ENCODE measurements at regions of chr16 and their contacts with region 1.

Region 1: GRCh38 chr16:51831595-51832367 is 680.7 kb upstream of the SALL1 start:
- DNase-seq: no peak
- H3K4me3 Mint-ChIP-seq: peak overlapping the region; percentile 19
- H3K27ac Mint-ChIP-seq: peak overlapping the region; percentile 24
- H3K4me1 Mint-ChIP-seq: peaks cover 21% of the 10 kb centered on the region
- H3K27me3 Mint-ChIP-seq: no peaks in the 10 kb centered on the region
- CTCF ChIP-seq: no peak

Region 2: GRCh38 chr16:51880776-51881175 is 49.0 kb after region 1 on chr16:
- CTCF ChIA-PET with region 1: no interaction called
- intact Hi-C with region 1: loop called (anchors 2 kb)
- DNase-seq: peak; percentile 3
- H3K4me3 Mint-ChIP-seq: peak overlapping the region; percentile 17
- H3K27ac Mint-ChIP-seq: peak overlapping the region; percentile 89
- H3K4me1 Mint-ChIP-seq: peaks cover 23% of the 10 kb centered on the region
- H3K27me3 Mint-ChIP-seq: no peaks in the 10 kb centered on the region
- CTCF ChIP-seq: no peak